ENCODE measurements at regions of chr12 and their contacts with region 1.

Region 1: DNA sequence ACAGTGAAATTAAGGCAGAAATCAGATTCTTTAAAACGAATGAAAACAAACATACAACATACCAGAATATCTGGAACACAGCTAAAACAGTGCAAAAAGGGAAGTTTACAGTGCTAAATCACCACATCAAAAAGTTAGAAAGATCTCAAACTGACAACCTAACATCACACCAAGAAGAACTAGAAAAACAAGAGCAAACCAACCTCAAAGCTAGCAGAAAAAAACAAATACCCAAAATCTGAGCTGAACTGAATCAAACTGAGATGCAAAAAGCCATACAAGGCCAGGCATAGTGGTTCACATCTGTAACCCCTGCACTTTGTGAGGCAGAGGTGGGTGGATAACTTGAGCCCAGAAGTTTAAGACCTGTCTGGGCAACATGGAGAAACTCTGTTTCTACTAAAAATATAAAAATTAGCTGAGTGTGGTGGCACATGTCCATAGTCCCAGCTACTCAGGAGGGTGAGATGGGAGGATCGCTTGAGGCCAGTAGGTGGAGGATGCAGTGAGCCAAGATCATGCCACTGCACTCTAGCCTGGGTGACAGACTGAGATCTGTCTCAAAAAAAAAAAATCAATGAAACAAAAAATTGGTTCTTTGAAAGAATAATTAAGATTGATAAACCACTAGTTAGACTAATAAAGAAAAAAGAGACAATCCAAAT is 33.2 kb upstream of the LDHB start:
- DNase-seq: no peak
- ATAC-seq: no peak
- H3K4me3 ChIP-seq: no peak overlapping the region
- H3K27ac ChIP-seq: no peak overlapping the region
- H3K4me1 ChIP-seq: no peaks in the 10 kb centered on the region
- H3K27me3 ChIP-seq: no peaks in the 10 kb centered on the region
- CTCF ChIP-seq: no peak
- POLR2A ChIP-seq: no peak

Region 2: GRCh38 chr12:21604245-21605101 is 86.4 kb before region 1 on chr12 and contains the start of gene GYS2:
- intact Hi-C with region 1: loop called (anchors 5 kb)
- DNase-seq: no peak
- ATAC-seq: no peak
- H3K4me3 ChIP-seq: no peak within 1 kb of the TSS
- H3K27ac ChIP-seq: no peak within 1 kb of the TSS
- H3K4me1 ChIP-seq: peaks cover 27% of the 10 kb centered on the region
- H3K27me3 ChIP-seq: no peaks in the 10 kb centered on the region
- CTCF ChIP-seq: no peak
- POLR2A ChIP-seq: no peak
- total RNA-seq, gene GYS2: not detected

Region 3: GRCh38 chr12:22204391-22204790 is 513.6 kb after region 1 on chr12:
- intact Hi-C with region 1: no loop called
- DNase-seq: no peak
- ATAC-seq: no peak
- H3K4me3 ChIP-seq: no peak overlapping the region
- H3K27ac ChIP-seq: no peak overlapping the region
- H3K4me1 ChIP-seq: no peaks in the 10 kb centered on the region
- H3K27me3 ChIP-seq: no peaks in the 10 kb centered on the region
- CTCF ChIP-seq: no peak
- POLR2A ChIP-seq: no peak

Measured in body of pancreas (tissue), 4 donors.